Mammary epithelial cell (primary cell): ENCODE measurements at regions of chr15 and their contacts with region 1.

Region 1: GRCh38 chr15:40582726-40583246 is 11.3 kb upstream of the KNL1 start:
- DNase-seq: peak; percentile 58
- H3K4me3 ChIP-seq: peak overlapping the region; percentile 17 to 34 (median 23)
- H3K27ac ChIP-seq: no peak overlapping the region
- H3K4me1 ChIP-seq: no peaks in the 10 kb centered on the region
- H3K27me3 ChIP-seq: no peaks in the 10 kb centered on the region
- CTCF ChIP-seq: no peak

Region 2: GRCh38 chr15:40550341-40551037 is 32.3 kb before region 1 on chr15:
- CTCF ChIA-PET with region 1: no interaction called
- dilution Hi-C with region 1: no loop called
- in situ Hi-C with region 1: no loop called
- intact Hi-C with region 1: no loop called
- DNase-seq: no peak
- H3K4me3 ChIP-seq: no peak overlapping the region
- H3K27ac ChIP-seq: no peak overlapping the region
- H3K4me1 ChIP-seq: no peaks in the 10 kb centered on the region
- H3K27me3 ChIP-seq: no peaks in the 10 kb centered on the region
- CTCF ChIP-seq: no peak

Region 3: GRCh38 chr15:40879604-40880003 is 296.8 kb after region 1 on chr15:
- CTCF ChIA-PET with region 1: no interaction called
- dilution Hi-C with region 1: loop called (anchors 10 kb)
- in situ Hi-C with region 1: no loop called
- intact Hi-C with region 1: no loop called
- DNase-seq: no peak
- H3K4me3 ChIP-seq: no peak overlapping the region
- H3K27ac ChIP-seq: no peak overlapping the region
- H3K4me1 ChIP-seq: peaks cover 11% of the 10 kb centered on the region
- H3K27me3 ChIP-seq: no peaks in the 10 kb centered on the region
- CTCF ChIP-seq: no peak